ENCODE measurements at regions of chr19 and their contacts with region 1.

Region 1: DNA sequence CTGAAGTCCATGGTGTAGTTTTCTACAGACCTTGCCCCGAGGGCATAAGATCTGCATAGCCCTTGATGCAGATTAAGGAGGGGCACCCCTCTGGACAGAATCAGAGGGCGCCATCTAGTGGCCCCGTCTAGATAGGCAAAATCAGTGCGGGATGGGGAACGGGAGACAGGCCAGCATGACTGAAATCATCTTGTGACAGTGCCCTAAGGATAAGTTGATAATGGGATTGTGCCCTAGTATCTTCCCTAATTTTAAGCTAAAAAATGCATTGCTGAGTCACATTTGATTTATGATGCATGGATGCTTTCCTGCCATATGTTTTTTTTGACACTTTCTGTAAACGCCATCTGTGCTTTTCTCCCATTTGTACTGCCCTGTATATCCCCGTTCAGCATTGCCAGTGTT is 19.0 kb upstream of the GPI start:
- DNase-seq: peak; percentile 81
- CTCF ChIP-seq: peak; percentile 68

Region 2: DNA sequence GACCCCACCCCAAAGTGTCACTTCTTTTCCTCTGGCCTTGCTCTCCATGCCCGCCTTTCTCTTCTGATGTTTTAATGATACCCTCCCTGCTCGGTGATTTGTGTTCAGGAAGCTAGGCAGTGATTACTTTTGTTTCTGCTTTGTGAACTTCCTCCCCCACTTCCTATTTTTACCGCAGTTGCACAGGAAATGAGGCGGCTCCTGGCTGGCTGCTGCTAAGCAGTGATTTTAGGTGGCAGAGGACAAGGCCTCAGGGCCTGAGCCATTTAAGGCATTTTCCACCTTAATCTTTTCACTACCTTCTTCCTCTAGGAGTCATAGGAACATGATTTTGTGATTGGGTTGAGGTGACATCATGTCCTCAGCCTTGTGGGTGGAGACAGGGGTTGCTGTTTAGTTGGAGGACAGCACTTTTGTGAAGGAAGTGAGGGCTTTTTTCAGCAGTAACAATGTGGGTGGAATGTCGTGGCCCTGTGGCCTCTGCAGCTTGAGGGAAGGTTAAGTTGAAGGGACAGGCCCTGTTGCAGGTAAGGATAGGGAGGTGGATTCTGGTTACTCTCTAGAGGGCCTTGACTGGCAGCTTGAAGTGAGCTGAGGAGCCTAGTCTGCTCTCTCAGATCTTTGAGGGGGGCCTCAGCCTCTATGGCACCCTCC is 75.9 kb before region 1 on chr19:
- CTCF ChIA-PET with region 1: no interaction called
- POLR2A ChIA-PET with region 1: no interaction called
- DNase-seq: peak; percentile 64
- CTCF ChIP-seq: no peak

Region 3: GRCh38 chr19:34359140-34359953 is 13.4 kb after region 1 on chr19:
- CTCF ChIA-PET with region 1: interaction called, 32 read pairs
- POLR2A ChIA-PET with region 1: no interaction called
- DNase-seq: peak; percentile 99
- CTCF ChIP-seq: peak; percentile 58